ENCODE measurements at regions of chr17 and their contacts with region 1.

Region 1: DNA sequence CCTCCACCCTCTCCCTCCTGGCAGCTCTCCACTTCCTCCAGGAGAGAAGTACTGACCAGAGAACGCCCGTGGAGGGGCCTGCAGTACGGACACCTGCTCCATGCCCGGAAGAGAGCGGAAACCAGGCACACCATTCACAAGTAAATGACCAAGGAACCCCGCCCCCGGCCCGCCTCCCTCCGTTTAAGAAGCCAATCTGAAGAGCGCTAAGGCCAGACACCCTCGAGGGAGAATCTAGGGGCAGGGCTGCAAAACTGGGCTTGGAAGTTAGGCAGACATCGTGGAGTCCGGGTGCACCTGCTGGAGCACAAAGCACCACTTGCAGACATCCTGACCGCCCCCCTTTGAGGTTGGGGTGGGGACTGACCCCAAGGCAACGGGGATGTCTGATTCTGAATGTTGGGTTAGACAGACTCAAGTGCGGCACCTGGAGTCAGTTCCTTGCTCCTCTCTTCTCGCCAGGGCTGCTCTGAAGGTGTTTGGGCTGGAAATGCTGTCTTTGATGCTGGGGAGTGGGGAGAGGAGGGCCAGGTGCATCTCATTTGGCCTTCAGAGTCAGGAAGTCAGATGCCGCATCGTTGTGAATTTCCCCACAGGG is 964 bp upstream of the FAAP100 start:
- DNase-seq: peak; percentile 73
- ATAC-seq: peak; percentile 77
- H3K4me3 Mint-ChIP-seq: peak overlapping the region; percentile 87
- H3K27ac Mint-ChIP-seq: peak overlapping the region; percentile 88
- H3K4me1 Mint-ChIP-seq: peaks cover 19% of the 10 kb centered on the region
- H3K27me3 Mint-ChIP-seq: no peaks in the 10 kb centered on the region

Region 2: DNA sequence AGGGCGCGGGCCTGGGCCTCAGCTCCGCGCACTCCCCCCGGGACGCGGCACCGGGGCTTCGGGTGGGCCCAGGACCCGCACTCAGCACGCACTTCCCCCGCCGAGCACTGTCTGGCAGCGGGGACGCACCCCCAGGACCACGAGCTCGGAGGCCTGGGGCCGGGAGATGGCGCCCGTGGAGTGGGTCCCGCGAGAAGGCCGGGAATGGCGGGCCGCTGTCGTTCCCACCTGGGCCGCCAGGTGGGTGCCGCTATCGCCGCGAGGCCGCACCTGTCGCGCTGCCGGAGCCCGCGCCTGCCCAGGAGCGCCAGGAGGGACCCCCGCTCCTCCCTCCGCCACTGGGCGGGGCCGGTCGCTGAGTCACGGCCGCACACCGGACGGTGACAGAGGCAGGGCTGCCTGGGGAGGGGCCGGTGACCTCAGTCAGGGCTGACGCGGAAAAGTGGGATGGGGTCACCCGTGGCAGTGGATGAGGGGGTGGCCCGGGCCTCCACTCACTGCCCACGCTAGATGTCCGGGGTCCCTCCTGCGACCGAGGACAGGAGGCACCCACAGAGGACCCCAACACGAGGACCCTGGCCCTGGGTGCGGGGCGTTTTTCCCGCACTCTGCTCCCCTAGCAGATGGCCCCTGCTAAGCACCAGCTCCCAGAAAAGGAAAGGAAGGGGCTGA is 33.7 kb before region 1 on chr17:
- POLR2A ChIA-PET with region 1: interaction called, 50 read pairs
- DNase-seq: peak; percentile 75
- ATAC-seq: peak; percentile 25
- H3K4me3 Mint-ChIP-seq: peak overlapping the region; percentile 25
- H3K27ac Mint-ChIP-seq: no peak overlapping the region
- H3K4me1 Mint-ChIP-seq: peaks cover 10% of the 10 kb centered on the region
- H3K27me3 Mint-ChIP-seq: peaks cover 5% of the 10 kb centered on the region

Region 3: DNA sequence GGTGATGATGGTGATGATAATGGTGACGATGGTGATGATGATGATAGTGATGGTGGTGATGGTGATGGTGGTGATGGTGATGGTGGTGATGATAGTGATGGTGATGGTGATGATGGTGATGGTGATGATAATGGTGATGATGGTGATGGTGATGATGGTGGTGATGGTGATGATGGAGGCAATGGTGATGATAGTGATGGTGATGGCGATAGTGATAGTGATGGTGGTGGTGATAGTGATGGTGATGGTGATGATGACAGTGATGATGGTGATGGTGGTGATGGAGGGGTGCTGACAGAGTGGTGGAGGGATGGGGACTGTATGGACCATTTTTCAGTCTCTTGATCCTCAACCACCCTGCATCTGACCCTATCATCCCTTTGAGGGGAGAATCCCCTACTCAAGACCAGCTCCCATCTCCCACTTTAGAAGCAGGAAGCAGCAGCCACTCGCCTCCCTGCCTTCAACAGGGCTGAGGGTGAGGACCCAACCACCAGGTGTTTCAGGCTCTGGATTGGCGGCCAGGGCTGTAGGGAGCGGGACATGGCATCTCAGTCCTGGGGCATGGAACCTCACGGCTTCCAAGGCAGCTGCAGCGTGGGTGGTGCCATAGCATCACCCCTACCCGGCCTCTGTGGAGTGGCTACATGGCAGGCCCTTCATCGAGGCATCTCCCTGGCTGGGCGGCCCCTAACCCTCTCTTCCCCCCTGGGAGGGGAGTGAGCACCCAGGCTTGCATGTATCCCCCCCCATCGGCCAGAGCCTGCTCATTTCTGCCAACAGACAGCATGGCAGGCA is 20.4 kb before region 1 on chr17:
- POLR2A ChIA-PET with region 1: no interaction called
- DNase-seq: no peak
- ATAC-seq: no peak
- H3K4me3 Mint-ChIP-seq: no peak overlapping the region
- H3K27ac Mint-ChIP-seq: no peak overlapping the region
- H3K4me1 Mint-ChIP-seq: no peaks in the 10 kb centered on the region
- H3K27me3 Mint-ChIP-seq: peaks cover 14% of the 10 kb centered on the region